Activated CD4-positive, alpha-beta T cell treated with anti-CD3 and anti-CD28 coated beads for 36 hours (primary cell): ENCODE measurements at regions of chr16 and their contacts with region 1.

Region 1: DNA sequence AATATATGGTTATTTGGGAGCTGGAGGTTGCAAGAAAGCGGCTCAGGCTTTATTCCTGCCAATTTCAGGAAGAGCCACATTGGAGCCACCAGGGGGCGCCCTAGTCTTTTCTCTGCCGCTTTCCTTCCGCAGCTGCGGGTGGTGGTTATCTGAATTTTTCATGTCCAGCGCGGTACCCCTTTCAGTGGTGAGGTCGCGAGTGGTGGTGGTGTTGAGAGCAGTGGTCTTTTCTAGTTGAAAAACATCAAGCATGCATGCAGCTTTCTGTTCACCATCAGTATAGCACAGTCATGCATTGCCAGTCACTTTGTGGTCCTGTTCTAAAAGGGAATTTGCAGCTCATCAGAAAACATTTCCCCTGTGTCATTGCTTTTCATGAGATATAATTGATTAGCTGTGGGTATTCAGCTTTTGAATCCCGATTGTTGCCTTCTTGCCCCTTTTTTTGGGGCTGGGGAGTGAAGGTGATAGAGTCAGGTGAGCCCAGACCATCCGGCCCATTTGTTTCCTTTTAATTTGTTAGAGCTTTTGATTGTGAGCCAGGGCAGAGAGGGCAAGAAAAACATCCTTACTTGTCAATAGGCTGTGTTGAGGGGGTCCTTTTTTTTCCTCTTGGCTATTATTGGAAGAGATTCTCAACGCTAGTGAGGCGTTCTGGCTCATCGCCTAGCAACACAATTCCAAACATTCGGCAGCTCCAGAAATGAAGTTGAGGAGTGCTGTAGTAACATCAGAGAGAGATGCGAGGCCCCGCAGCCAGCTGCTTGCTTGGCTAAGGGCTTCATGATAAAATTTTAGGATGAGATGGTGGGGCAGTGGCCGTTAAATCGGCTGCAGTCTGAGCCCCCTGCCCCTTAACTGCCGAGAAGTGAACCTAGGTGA is 119.0 kb downstream of the SNX29 start:
- DNase-seq: peak; percentile 83
- ATAC-seq: peak; percentile 44
- H3K4me3 Mint-ChIP-seq: peak overlapping the region; percentile 19
- H3K27ac Mint-ChIP-seq: peak overlapping the region; percentile 28
- H3K4me1 Mint-ChIP-seq: peaks cover 22% of the 10 kb centered on the region
- H3K27me3 Mint-ChIP-seq: no peaks in the 10 kb centered on the region

Region 2: DNA sequence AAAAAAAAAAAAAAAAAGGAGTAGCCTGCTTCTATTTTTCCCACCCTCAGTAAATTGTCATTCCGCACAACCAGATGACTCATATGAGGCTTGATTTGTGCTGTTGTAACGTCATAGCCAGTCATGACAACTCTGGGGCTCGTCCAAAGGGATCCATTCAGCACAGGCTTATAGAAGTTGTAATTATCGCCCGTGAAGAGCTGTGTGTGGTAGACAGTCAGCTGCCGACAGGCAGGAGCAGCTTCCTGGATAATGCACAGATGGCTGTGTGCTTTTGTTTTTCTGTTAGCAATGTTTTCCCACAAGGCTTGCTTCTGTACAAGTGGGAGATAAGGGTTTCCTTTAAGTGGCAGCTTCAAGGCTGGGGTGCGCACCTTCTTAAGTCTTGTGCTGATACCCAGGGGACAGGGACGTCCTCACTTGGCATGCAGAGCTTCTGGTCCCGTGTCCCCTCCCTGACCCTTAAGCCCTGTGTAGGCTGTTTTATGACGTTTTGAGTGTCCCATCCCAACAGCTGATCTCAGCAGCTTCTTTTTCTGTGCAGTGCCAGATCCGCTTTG is 93.0 kb before region 1 on chr16:
- CTCF ChIA-PET with region 1: no interaction called
- POLR2A ChIA-PET with region 1: no interaction called
- intact Hi-C with region 1: no loop called
- DNase-seq: no peak
- ATAC-seq: no peak
- H3K4me3 Mint-ChIP-seq: no peak overlapping the region
- H3K27ac Mint-ChIP-seq: no peak overlapping the region
- H3K4me1 Mint-ChIP-seq: no peaks in the 10 kb centered on the region
- H3K27me3 Mint-ChIP-seq: no peaks in the 10 kb centered on the region

Region 3: GRCh38 chr16:12067714-12068401 is 27.7 kb before region 1 on chr16:
- CTCF ChIA-PET with region 1: interaction called, 21 read pairs
- POLR2A ChIA-PET with region 1: no interaction called
- intact Hi-C with region 1: no loop called
- DNase-seq: peak; percentile 67
- ATAC-seq: peak; percentile 83
- H3K4me3 Mint-ChIP-seq: no peak overlapping the region
- H3K27ac Mint-ChIP-seq: no peak overlapping the region
- H3K4me1 Mint-ChIP-seq: no peaks in the 10 kb centered on the region
- H3K27me3 Mint-ChIP-seq: no peaks in the 10 kb centered on the region

Region 4: DNA sequence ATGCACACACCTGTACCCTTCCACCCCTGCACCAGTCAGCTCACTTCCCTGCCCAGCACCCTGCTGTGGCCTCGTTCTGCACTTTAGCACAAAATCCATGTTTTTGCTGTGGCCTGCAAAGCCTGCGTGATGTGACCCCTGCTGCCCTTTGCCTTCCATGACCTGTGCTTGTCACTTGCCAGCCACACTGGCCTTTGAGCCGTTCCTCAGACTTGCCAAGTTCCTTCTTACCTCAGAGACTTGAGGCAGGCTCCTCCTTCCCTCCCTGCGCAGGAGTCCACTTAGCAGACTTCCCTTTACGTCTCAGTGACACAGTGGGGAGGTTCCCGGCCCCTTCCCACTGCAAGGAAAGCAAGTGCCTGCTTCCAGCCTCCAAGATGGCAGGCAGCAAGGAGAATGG is 15.7 kb after region 1 on chr16:
- CTCF ChIA-PET with region 1: interaction called, 14 read pairs
- POLR2A ChIA-PET with region 1: no interaction called
- intact Hi-C with region 1: no loop called
- DNase-seq: no peak
- ATAC-seq: no peak
- H3K4me3 Mint-ChIP-seq: no peak overlapping the region
- H3K27ac Mint-ChIP-seq: no peak overlapping the region
- H3K4me1 Mint-ChIP-seq: no peaks in the 10 kb centered on the region
- H3K27me3 Mint-ChIP-seq: no peaks in the 10 kb centered on the region

Region 5: DNA sequence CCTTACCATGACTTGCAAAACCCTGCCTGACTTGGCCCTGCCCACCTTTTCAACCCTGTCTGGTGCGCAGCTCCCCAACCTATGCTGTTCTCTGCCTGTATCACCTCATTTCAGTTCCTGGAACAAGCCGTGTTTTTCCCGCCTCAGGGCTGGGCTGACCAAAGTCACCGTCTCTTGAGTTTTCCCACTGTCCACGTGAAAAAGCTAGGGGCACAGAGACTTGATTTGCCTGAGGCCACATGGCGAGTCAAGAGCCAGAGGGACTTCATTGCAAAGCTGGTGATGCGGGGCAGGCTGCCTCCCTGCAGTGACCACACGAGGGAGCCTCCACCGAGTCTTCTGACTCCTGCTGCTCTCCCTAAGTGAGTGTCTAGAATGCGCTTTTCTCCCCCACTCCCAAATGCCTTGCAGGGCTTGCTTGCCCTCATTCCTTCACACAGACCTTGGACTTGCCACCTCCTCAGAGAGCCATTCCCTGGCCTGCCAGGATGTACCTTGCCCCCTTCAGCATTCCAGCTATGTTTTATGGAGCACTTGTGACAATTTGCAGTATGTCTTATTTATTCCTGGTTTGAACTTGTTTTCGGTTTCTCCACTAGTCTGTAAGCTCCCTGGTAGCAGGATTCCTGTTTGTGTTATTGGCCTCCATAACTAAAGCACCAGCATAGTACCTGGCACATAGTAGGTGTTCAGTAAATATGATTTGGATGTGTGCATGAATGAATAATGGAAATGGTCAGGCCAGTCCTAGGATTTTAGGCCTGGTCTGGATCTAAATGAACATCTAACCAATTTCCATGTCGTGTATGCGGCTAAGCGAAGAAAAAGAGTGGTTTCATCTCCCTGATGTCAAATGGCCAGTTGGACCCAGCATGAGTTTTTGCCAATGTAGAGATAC is 133.3 kb after region 1 on chr16:
- CTCF ChIA-PET with region 1: interaction called, 16 read pairs
- POLR2A ChIA-PET with region 1: no interaction called
- intact Hi-C with region 1: loop called in 1 of 2 experiments (anchors 1 kb)
- DNase-seq: peak; percentile 68
- ATAC-seq: peak; percentile 77
- H3K4me3 Mint-ChIP-seq: no peak overlapping the region
- H3K27ac Mint-ChIP-seq: peak overlapping the region; percentile 43
- H3K4me1 Mint-ChIP-seq: peaks cover 17% of the 10 kb centered on the region
- H3K27me3 Mint-ChIP-seq: no peaks in the 10 kb centered on the region

Region 6: GRCh38 chr16:12271006-12271405 is 175.5 kb after region 1 on chr16:
- CTCF ChIA-PET with region 1: interaction called, 5 read pairs
- POLR2A ChIA-PET with region 1: no interaction called
- intact Hi-C with region 1: loop called in 1 of 2 experiments (anchors 5 kb)
- DNase-seq: peak; percentile 24
- ATAC-seq: no peak
- H3K4me3 Mint-ChIP-seq: no peak overlapping the region
- H3K27ac Mint-ChIP-seq: no peak overlapping the region
- H3K4me1 Mint-ChIP-seq: no peaks in the 10 kb centered on the region
- H3K27me3 Mint-ChIP-seq: no peaks in the 10 kb centered on the region

Region 7: GRCh38 chr16:12449795-12450194 is 354.3 kb after region 1 on chr16:
- CTCF ChIA-PET with region 1: no interaction called
- POLR2A ChIA-PET with region 1: no interaction called
- intact Hi-C with region 1: loop called in 1 of 2 experiments (anchors 5 kb)
- DNase-seq: peak; percentile 63
- ATAC-seq: peak; percentile 96
- H3K4me3 Mint-ChIP-seq: no peak overlapping the region
- H3K27ac Mint-ChIP-seq: peak overlapping the region; percentile 65
- H3K4me1 Mint-ChIP-seq: peaks cover 11% of the 10 kb centered on the region
- H3K27me3 Mint-ChIP-seq: no peaks in the 10 kb centered on the region

Region 8: DNA sequence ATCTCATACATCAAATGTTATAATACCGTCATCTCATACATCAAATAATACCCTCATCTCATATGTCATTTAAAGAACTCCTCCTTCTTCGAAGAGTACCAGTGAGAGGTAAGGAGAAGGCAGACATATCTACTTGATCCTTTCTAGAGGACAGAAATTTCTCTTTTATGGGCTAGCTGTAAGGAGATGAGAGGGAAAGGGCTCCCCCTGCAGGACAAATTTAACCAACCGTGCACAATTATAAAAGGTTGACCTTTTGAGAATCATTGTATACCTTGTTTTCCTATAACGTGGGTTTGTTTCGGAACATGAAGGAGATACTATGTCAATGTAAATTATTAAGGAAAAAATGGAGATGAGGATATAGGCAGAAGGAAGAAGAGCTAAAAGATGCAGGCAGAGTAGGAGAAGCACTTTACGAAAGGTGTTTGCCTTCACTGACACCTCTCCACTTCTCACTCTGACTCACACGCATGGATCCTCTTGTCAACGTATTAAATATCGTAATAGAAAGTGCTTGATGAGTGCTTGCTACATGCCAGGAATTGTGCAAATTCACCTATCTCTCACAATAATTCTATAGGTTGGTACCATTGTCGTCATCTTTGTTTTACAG is 1358.5 kb after region 1 on chr16:
- CTCF ChIA-PET with region 1: interaction called, 8 read pairs
- POLR2A ChIA-PET with region 1: no interaction called
- intact Hi-C with region 1: loop called in 1 of 2 experiments (anchors 2 kb)
- DNase-seq: peak; percentile 56
- ATAC-seq: no peak
- H3K4me3 Mint-ChIP-seq: no peak overlapping the region
- H3K27ac Mint-ChIP-seq: no peak overlapping the region
- H3K4me1 Mint-ChIP-seq: no peaks in the 10 kb centered on the region
- H3K27me3 Mint-ChIP-seq: peaks cover 15% of the 10 kb centered on the region